Left cardiac atrium (tissue), 4 donors: ENCODE measurements at regions of chr7 and their contacts with region 1.

Region 1: GRCh38 chr7:112550468-112551060 is 69.8 kb downstream of the LSMEM1 start:
- DNase-seq: no peak
- ATAC-seq: peak; percentile 50 to 57

Region 2: DNA sequence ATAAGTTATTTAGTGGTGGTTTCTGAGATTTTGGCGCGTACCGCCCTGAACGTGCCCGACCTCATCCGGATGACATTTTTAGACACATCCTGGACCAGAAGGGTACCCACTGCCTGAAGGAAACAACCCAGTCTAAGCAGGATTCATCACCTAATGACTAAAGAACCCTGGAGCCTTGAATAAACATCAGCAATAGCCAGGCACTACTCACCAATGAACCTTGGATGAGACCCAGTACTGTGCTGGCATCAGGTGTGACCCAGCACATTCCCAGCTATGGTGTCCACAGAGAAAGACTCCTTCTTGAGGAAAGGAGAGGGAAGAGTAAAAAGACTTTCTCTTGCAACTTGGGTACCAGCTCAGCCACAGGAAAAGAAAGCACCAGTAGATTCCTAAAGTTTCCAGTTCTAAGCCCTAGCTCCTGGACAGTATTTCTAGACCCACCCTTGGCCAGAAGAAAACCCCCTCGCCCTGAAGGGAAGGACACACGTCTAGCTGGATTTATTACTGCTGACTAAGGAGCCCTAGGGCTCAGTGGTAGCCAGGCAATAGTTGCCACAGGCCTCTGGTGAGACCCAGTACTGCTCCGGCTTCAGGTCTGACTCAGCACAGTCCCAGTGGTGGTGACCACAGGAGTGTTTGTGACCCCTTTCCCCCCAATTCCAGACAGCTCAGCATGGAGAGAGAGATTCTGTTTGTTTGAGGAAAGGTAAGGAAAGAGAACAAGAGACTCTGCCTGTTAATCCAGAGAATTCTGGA is 311.5 kb before region 1 on chr7:
- intact Hi-C with region 1: no loop called
- DNase-seq: no peak
- ATAC-seq: no peak

Region 3: GRCh38 chr7:112898432-112899290 is 348.1 kb after region 1 on chr7:
- intact Hi-C with region 1: loop called in 1 of 2 experiments (anchors 5 kb)
- DNase-seq: no peak
- ATAC-seq: peak; percentile 66 to 79